A673 (cell line): ENCODE measurements at regions of chr5 and their contacts with region 1.

Region 1: DNA sequence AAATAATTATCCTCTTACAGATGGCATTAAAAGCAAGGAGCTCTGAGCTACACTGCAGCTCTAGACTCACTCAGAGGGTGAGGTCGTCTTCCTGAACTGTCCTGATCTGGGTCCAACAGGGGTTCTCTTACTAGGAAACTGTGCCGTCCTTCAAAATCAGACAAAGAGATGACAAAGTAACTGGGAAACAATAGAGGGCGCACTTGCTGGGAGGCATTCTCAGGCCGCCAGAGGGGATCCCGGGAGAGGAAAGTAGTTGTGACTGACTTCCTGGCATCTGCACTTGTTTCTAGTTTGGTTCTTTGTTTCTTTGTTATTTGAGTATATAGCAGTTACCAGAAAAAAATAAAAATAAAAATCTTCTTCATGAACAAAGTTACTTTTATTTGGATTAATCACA is 142.9 kb upstream of the MSX2 start:
- DNase-seq: peak; percentile 42
- H3K4me3 ChIP-seq: no peak overlapping the region
- H3K27ac ChIP-seq: no peak overlapping the region
- H3K4me1 ChIP-seq: no peaks in the 10 kb centered on the region
- H3K27me3 ChIP-seq: no peaks in the 10 kb centered on the region
- CTCF ChIP-seq: peak; percentile 48

Region 2: DNA sequence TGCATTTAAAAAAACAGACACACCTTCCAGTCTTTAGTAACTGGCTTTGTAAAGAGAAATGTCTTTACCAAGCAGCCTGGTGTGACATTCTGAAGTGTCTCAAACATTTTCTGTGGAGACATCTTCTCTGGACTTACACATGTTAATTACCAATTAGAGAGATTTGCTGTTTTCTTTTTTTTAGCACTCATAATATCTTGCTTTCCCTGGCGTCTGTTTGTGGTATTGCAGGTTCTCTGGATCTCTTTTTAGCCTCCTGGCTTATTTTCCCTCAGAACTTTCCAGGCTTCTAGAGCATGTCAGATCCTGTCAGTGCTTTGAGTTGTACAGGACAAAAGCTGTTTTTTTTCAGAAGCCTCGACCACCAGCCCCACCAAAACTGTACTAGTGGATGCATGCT is 235.4 kb after region 1 on chr5:
- CTCF ChIA-PET with region 1: interaction called, 18 read pairs
- POLR2A ChIA-PET with region 1: no interaction called
- intact Hi-C with region 1: no loop called
- DNase-seq: no peak
- H3K4me3 ChIP-seq: no peak overlapping the region
- H3K27ac ChIP-seq: no peak overlapping the region
- H3K4me1 ChIP-seq: no peaks in the 10 kb centered on the region
- H3K27me3 ChIP-seq: peaks cover 10% of the 10 kb centered on the region
- CTCF ChIP-seq: peak; percentile 44

Region 3: DNA sequence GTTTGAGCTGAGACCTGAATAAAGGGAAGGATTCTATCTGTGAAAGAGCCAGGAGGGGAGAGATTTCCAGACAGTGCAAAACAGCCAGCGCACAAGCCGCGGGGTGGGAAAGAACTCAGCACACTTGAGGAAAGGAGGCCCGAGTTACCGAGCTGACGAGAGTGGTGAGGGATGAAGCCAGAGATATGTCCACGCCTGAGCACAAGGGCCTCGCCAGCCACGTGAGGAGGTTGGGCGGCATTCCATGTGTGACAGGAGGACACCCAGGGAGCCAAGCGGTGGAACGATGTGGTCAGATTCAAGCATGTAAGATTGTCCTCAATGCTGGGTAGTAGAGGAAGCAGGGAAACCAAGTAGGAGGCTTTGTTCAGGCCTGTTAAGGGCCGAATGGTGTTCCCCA is 879.9 kb after region 1 on chr5:
- CTCF ChIA-PET with region 1: interaction called, 10 read pairs
- POLR2A ChIA-PET with region 1: no interaction called
- intact Hi-C with region 1: no loop called
- DNase-seq: no peak
- H3K4me3 ChIP-seq: no peak overlapping the region
- H3K27ac ChIP-seq: no peak overlapping the region
- H3K4me1 ChIP-seq: no peaks in the 10 kb centered on the region
- H3K27me3 ChIP-seq: peaks cover 7% of the 10 kb centered on the region
- CTCF ChIP-seq: no peak